GM12878 (cell line): ENCODE measurements at regions of chr16 and their contacts with region 1.

Region 1: GRCh38 chr16:69123910-69124309 is 8.5 kb downstream of the CHTF8 start:
- DNase-seq: no peak
- ATAC-seq: peak; percentile 83
- H3K4me3 ChIP-seq: no peak overlapping the region
- H3K27ac ChIP-seq: no peak overlapping the region
- H3K4me1 ChIP-seq: no peaks in the 10 kb centered on the region; the same call in 1 of the 2 replicates
- H3K27me3 ChIP-seq: no peaks in the 10 kb centered on the region
- CTCF ChIP-seq: peak; percentile 56 to 69 (median 57); a peak in 5 of 6 replicates
- EP300 ChIP-seq: no peak
- POLR2A ChIP-seq: no peak
- RAD21 ChIP-seq: peak; percentile 80

Region 2: GRCh38 chr16:68520649-68521086 is 603.2 kb before region 1 on chr16:
- CTCF ChIA-PET with region 1: interaction called, 6 read pairs
- POLR2A ChIA-PET with region 1: no interaction called
- RAD21 ChIA-PET with region 1: no interaction called
- SMC1A ChIA-PET with region 1: no interaction called
- in situ Hi-C with region 1: loop called (anchors 5 kb)
- intact Hi-C with region 1: no loop called
- DNase-seq: no peak
- ATAC-seq: peak; percentile 98
- H3K4me3 ChIP-seq: no peak overlapping the region
- H3K27ac ChIP-seq: no peak overlapping the region
- H3K4me1 ChIP-seq: no peaks in the 10 kb centered on the region; the same call in 1 of the 2 replicates
- H3K27me3 ChIP-seq: no peaks in the 10 kb centered on the region; a peak in 1 of 4 replicates
- CTCF ChIP-seq: peak; percentile 99 to 100 (median 100); a peak in 5 of 6 replicates
- EP300 ChIP-seq: peak in 1 of 2 experiments; percentile 25; a peak in 1 of 4 replicates
- POLR2A ChIP-seq: no peak
- RAD21 ChIP-seq: peak; percentile 55

Region 3: GRCh38 chr16:68704232-68704867 is 419.6 kb before region 1 on chr16:
- CTCF ChIA-PET with region 1: interaction called, 3 read pairs
- POLR2A ChIA-PET with region 1: no interaction called
- RAD21 ChIA-PET with region 1: no interaction called
- SMC1A ChIA-PET with region 1: no interaction called
- in situ Hi-C with region 1: loop called (anchors 5 kb)
- intact Hi-C with region 1: loop called (anchors 1 kb)
- DNase-seq: no peak
- ATAC-seq: peak; percentile 93
- H3K4me3 ChIP-seq: no peak overlapping the region
- H3K27ac ChIP-seq: no peak overlapping the region
- H3K4me1 ChIP-seq: peaks cover 3% of the 10 kb centered on the region; the same call in 1 of the 2 replicates
- H3K27me3 ChIP-seq: no peaks in the 10 kb centered on the region
- CTCF ChIP-seq: peak; percentile 82 to 89 (median 87)
- EP300 ChIP-seq: no peak
- POLR2A ChIP-seq: no peak
- RAD21 ChIP-seq: peak; percentile 98

Region 4: GRCh38 chr16:68848786-68849185 is 275.1 kb before region 1 on chr16:
- CTCF ChIA-PET with region 1: interaction called, 55 read pairs
- POLR2A ChIA-PET with region 1: interaction called, 7 read pairs
- RAD21 ChIA-PET with region 1: interaction called, 26 read pairs
- SMC1A ChIA-PET with region 1: interaction called, 20 read pairs
- in situ Hi-C with region 1: loop called (anchors 5 kb)
- intact Hi-C with region 1: loop called (anchors 5 kb)
- DNase-seq: no peak
- ATAC-seq: no peak
- H3K4me3 ChIP-seq: no peak overlapping the region
- H3K27ac ChIP-seq: no peak overlapping the region
- H3K4me1 ChIP-seq: peaks cover 9% of the 10 kb centered on the region
- H3K27me3 ChIP-seq: no peaks in the 10 kb centered on the region
- CTCF ChIP-seq: no peak
- EP300 ChIP-seq: no peak
- POLR2A ChIP-seq: no peak
- RAD21 ChIP-seq: no peak

Region 5: DNA sequence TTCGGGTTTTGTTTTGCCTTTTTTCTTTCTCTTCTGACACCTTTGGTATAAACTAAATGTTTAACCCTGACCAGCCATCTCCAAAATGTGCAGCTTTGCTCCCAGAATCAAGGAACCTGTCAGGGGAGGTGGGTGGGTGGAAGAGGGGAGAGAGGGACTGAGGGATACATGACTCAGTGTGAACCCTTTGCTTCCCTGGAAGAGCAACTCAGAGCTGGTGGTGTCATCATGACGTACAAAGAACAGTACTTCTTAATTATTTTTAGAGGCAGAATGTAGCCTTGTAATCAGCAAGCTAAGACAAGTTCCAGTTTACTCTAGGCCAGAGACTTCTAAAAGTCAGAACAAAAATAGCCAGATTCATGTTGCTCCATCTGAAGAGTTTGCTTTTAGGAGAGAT is 138.1 kb before region 1 on chr16:
- CTCF ChIA-PET with region 1: interaction called, 12 read pairs
- POLR2A ChIA-PET with region 1: no interaction called
- RAD21 ChIA-PET with region 1: no interaction called
- SMC1A ChIA-PET with region 1: interaction called, 12 read pairs
- in situ Hi-C with region 1: no loop called
- intact Hi-C with region 1: no loop called
- DNase-seq: no peak
- ATAC-seq: no peak
- H3K4me3 ChIP-seq: no peak overlapping the region
- H3K27ac ChIP-seq: no peak overlapping the region
- H3K4me1 ChIP-seq: peaks cover under 1% of the 10 kb centered on the region; the same call in 1 of the 2 replicates
- H3K27me3 ChIP-seq: no peaks in the 10 kb centered on the region
- CTCF ChIP-seq: no peak
- EP300 ChIP-seq: no peak
- POLR2A ChIP-seq: no peak
- RAD21 ChIP-seq: no peak

Region 6: GRCh38 chr16:69031877-69032301 is 92.0 kb before region 1 on chr16:
- CTCF ChIA-PET with region 1: no interaction called
- POLR2A ChIA-PET with region 1: no interaction called
- RAD21 ChIA-PET with region 1: no interaction called
- SMC1A ChIA-PET with region 1: no interaction called
- in situ Hi-C with region 1: no loop called
- intact Hi-C with region 1: no loop called
- DNase-seq: no peak
- ATAC-seq: no peak
- H3K4me3 ChIP-seq: no peak overlapping the region
- H3K27ac ChIP-seq: no peak overlapping the region
- H3K4me1 ChIP-seq: no peaks in the 10 kb centered on the region
- H3K27me3 ChIP-seq: no peaks in the 10 kb centered on the region
- CTCF ChIP-seq: no peak
- EP300 ChIP-seq: no peak
- POLR2A ChIP-seq: no peak
- RAD21 ChIP-seq: no peak

Region 7: DNA sequence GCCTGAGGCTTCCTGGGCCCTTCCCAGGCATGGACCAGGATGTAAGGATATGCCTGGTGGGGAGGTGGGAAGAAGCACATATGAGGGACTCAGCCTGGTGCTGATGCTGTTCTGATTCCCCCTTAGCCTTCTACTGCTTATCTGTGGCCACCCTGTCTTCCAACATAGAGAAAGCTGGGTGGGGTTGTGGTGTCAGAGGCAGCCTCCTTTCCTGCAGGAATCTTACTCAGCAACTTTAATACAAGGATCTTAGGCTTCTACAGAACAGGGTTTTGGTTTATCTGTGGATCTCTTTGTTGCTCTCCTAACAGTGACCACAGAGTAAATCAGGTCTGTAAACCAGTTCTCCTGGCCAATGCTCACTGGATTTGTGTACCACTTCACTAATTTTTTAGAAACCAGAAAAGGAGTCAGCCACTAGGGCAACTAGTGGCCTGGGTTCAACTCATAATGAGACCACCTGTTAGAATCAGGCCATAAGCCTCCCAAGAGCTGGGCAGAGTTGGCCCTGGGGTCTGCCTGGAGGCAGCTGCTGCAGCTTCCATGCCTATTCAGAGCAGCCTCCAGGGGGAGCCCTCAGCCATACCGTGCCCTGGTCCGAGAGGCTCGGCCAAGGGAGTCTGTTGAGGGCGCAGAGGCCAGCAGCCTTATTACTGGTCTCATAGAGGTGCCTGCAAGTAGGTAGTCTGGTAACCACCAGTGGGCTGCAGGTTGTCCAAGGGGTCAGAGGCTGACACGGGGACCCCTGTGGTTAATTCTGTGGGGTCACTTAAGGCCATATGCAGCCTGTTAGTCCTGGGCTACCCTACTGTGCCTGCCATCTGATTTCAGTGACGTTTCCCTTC is 11.4 kb before region 1 on chr16:
- CTCF ChIA-PET with region 1: interaction called, 38 read pairs
- POLR2A ChIA-PET with region 1: no interaction called
- RAD21 ChIA-PET with region 1: interaction called, 3 read pairs
- SMC1A ChIA-PET with region 1: interaction called, 20 read pairs
- in situ Hi-C with region 1: no loop called
- intact Hi-C with region 1: no loop called
- DNase-seq: no peak
- ATAC-seq: peak; percentile 99
- H3K4me3 ChIP-seq: no peak overlapping the region
- H3K27ac ChIP-seq: no peak overlapping the region
- H3K4me1 ChIP-seq: no peaks in the 10 kb centered on the region
- H3K27me3 ChIP-seq: no peaks in the 10 kb centered on the region
- CTCF ChIP-seq: peak; percentile 83 to 91 (median 84)
- EP300 ChIP-seq: no peak
- POLR2A ChIP-seq: no peak
- RAD21 ChIP-seq: peak; percentile 48

Region 8: GRCh38 chr16:69179328-69180010 is 55.6 kb after region 1 on chr16:
- CTCF ChIA-PET with region 1: no interaction called
- POLR2A ChIA-PET with region 1: no interaction called
- RAD21 ChIA-PET with region 1: no interaction called
- SMC1A ChIA-PET with region 1: no interaction called
- in situ Hi-C with region 1: no loop called
- intact Hi-C with region 1: no loop called
- DNase-seq: no peak
- ATAC-seq: peak; percentile 64; the same call in 2 of the 3 replicates
- H3K4me3 ChIP-seq: no peak overlapping the region
- H3K27ac ChIP-seq: no peak overlapping the region
- H3K4me1 ChIP-seq: no peaks in the 10 kb centered on the region
- H3K27me3 ChIP-seq: no peaks in the 10 kb centered on the region
- CTCF ChIP-seq: no peak
- EP300 ChIP-seq: no peak
- POLR2A ChIP-seq: no peak
- RAD21 ChIP-seq: no peak